Right ventricle myocardium inferior (tissue), 1 donor: ENCODE measurements at regions of chr2 and their contacts with region 1.

Region 1: GRCh38 chr2:235106874-235107639 is 155.2 kb downstream of the SH3BP4 start:
- DNase-seq: no peak
- ATAC-seq: peak; percentile 65

Region 2: DNA sequence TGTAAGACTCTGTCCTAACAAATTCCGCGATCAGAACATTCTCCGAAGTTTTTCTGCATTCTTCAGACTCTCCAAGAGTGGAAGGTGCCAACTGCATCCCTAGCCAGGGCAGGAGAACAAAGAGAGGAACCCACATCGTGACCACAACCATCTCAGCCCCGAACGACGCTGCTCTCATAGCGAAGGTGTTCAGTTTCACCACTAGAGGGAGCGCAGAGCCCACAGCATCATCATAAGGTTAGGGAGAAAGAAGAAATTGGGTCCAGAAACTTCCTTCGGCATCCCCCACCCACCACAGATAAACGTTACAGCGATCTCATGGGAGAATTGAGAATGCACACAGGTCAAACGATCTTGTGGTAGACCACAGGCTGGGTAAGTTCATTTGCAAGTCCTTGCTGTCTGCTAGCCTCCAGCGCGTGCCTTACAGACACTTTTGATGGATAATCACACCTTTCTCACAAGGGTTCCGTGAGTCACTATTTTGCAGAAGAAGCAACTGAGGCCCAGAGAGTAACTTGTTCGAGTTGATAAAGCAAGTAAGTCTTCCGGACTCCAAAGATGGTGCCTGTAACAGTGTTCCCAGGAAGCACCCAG is 556.4 kb before region 1 on chr2:
- intact Hi-C with region 1: loop called (anchors 1 kb)
- DNase-seq: peak; percentile 72
- ATAC-seq: peak; percentile 73

Region 3: GRCh38 chr2:234564699-234565098 is 542.4 kb before region 1 on chr2:
- intact Hi-C with region 1: no loop called
- DNase-seq: no peak
- ATAC-seq: no peak

Region 4: GRCh38 chr2:234881413-234882241 is 225.4 kb before region 1 on chr2:
- intact Hi-C with region 1: loop called (anchors 5 kb)
- DNase-seq: peak; percentile 79
- ATAC-seq: peak; percentile 94

Region 5: GRCh38 chr2:235005603-235006259 is 101.3 kb before region 1 on chr2:
- intact Hi-C with region 1: loop called (anchors 5 kb)
- DNase-seq: peak; percentile 80
- ATAC-seq: peak; percentile 80

Region 6: GRCh38 chr2:235087812-235088495 is 19.1 kb before region 1 on chr2:
- intact Hi-C with region 1: loop called (anchors 1 kb)
- DNase-seq: peak; percentile 79
- ATAC-seq: peak; percentile 79

Region 7: DNA sequence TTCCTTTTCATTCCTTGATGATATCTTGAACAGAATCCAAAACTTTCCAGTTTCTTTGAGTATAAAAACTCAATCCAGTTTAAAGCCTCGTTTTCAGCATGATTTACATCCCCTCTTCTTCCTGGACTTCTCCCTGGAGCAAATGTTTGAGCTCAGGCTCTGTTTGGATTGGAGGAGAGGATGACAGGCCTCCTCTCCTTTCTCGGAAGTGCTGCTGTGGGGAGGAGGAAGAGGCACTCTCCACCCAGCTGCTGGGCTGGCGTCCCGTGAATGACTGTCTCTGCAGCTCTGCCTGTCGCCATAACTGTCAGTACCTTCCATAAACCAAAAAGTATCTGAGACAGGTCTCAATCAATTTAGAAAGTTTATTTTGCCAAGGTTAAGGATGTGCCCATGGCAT is 148.6 kb after region 1 on chr2:
- intact Hi-C with region 1: no loop called
- DNase-seq: no peak
- ATAC-seq: peak; percentile 67